ENCODE measurements at regions of chrX and their contacts with region 1.

Region 1: DNA sequence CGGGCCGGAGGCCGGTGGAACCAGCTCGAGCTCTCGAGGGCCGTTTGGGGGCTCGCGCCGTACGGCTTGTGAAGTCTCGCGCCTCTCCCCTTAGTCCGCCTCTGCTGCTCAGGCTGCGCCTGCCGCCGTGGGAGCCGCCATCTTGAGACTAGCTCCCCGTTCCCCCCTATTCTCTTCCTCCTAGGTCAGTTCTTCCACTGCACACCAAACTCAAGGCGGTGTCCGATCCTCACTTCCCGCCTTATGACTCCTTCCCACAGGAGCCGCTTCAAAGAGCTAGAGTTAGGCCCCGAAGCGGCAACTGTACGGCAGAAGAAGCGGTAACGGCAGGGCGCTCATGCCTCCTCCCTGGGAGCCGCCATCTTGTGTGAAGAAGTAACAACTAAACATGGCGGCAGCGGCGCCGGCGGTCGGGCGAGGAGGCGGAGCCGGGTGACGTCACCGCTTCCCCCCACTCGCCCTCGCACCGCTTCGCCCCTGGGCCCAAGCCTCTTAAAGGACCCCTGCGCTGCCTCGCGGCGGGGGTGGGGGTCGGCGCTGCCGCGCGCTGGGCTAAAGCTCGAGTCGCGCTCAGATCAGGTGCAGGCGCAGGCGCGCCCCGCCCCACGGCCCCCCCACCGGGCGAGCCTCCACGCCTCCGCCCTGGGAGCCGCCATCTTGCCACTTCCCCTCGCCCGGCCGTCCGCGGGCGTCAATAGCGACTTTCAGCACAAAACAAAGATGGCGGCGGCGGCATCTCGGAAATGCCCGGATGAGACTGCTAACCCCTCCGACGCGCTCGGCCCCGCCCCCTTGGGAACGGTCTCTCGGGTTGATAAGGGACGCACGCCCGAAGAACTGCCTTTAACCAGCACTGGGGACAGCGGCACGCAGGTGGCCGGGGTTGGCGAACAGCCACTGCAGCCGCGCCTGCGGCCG is at the start of gene HCFC1:
- DNase-seq: peak; percentile 88
- ATAC-seq: peak; percentile 31
- H3K4me3 Mint-ChIP-seq: peak within 1 kb of the TSS; percentile 100
- H3K27ac Mint-ChIP-seq: peak within 1 kb of the TSS; percentile 100
- H3K4me1 Mint-ChIP-seq: peaks cover 12% of the 10 kb centered on the region
- H3K27me3 Mint-ChIP-seq: no peaks in the 10 kb centered on the region
- total RNA-seq, gene HCFC1: 101 to 107 TPM

Region 2: GRCh38 chrX:153744214-153744724 is 227.4 kb before region 1 on chrX:
- POLR2A ChIA-PET with region 1: no interaction called
- DNase-seq: no peak
- ATAC-seq: no peak
- H3K4me3 Mint-ChIP-seq: no peak overlapping the region
- H3K27ac Mint-ChIP-seq: no peak overlapping the region
- H3K4me1 Mint-ChIP-seq: peaks cover 13% of the 10 kb centered on the region
- H3K27me3 Mint-ChIP-seq: peaks cover 9% of the 10 kb centered on the region

Region 3: GRCh38 chrX:153885968-153886903 is 85.5 kb before region 1 on chrX and contains the start of gene L1CAM:
- POLR2A ChIA-PET with region 1: no interaction called
- DNase-seq: no peak
- ATAC-seq: peak; percentile 48
- H3K4me3 Mint-ChIP-seq: peak within 1 kb of the TSS; percentile 64
- H3K27ac Mint-ChIP-seq: no peak within 1 kb of the TSS
- H3K4me1 Mint-ChIP-seq: no peaks in the 10 kb centered on the region
- H3K27me3 Mint-ChIP-seq: peaks cover 29% of the 10 kb centered on the region
- total RNA-seq, gene L1CAM: 4.5 to 7.2 TPM

Region 4: GRCh38 chrX:153927922-153928760 is 43.6 kb before region 1 on chrX:
- POLR2A ChIA-PET with region 1: interaction called, 110 read pairs
- DNase-seq: peak; percentile 91
- ATAC-seq: peak; percentile 77
- H3K4me3 Mint-ChIP-seq: peak overlapping the region; percentile 97
- H3K27ac Mint-ChIP-seq: peak overlapping the region; percentile 98
- H3K4me1 Mint-ChIP-seq: peaks cover 15% of the 10 kb centered on the region
- H3K27me3 Mint-ChIP-seq: no peaks in the 10 kb centered on the region

Region 5: DNA sequence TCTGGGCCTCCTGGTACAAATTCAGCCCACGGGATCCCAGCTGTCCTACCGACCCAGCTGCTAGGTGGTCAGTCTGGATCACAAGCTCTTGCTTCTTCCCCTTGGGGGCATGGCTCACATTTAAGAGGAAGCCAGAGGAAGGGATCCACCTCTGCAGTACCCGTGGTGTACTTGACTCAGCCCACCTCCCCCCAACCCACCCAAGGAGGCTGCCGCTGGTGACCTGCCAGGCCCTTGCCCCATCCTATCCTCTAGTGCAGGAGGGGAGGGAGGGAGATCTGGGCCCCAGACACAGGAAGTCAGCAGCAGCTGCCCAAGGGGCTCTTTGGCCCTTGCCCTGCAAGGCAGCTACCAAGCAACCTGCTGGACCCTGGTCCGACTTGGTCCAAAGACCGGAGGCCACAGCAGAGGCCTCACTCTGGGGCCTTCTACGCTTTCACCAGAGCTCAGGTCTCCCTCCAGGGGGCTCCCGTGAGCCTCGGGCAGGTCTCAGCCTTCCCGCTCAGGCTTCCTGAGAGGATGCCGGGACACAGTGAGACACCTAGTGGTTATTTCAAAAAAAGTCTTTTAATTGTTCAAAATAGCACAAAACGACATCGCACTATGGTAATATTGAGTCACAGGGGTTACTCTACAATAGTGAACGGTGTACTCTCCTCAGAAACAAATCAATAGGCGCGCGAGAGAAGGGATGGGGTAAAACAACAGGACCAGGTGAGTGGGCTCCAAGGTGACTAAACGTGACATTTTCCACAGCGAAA is 24.5 kb before region 1 on chrX:
- POLR2A ChIA-PET with region 1: interaction called, 10 read pairs
- DNase-seq: peak; percentile 81
- ATAC-seq: peak; percentile 79
- H3K4me3 Mint-ChIP-seq: peak overlapping the region; percentile 52
- H3K27ac Mint-ChIP-seq: peak overlapping the region; percentile 87
- H3K4me1 Mint-ChIP-seq: peaks cover 15% of the 10 kb centered on the region
- H3K27me3 Mint-ChIP-seq: no peaks in the 10 kb centered on the region

Region 6: DNA sequence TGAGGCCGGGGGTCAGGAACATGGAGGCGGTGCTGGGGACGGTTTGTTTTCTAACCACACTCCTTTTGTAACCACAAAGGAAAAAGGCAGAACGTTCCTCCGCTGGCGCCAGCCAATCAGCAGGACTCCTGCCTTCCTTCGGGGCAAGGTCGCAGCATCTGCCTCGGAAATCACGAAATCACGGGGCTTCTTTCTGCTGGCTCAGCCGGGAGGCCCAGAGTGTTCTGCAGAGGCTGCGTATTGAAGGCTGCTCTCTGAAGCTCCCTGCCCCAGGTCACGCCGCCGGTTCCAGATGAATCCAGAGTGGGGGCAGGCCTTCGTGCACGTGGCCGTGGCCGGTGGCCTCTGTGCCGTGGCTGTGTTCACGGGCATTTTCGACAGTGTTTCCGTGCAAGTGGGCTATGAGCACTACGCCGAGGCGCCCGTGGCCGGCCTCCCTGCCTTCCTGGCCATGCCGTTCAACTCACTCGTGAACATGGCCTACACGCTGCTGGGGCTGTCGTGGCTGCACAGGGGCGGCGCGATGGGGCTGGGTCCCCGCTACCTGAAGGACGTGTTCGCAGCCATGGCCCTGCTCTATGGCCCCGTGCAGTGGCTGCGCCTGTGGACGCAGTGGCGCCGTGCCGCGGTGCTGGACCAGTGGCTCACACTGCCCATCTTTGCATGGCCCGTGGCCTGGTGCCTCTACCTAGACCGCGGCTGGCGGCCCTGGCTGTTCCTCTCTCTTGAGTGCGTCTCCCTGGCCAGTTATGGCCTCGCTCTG is 10.2 kb after region 1 on chrX:
- POLR2A ChIA-PET with region 1: interaction called, 62 read pairs
- DNase-seq: peak; percentile 63
- ATAC-seq: peak; percentile 51
- H3K4me3 Mint-ChIP-seq: peak overlapping the region; percentile 63
- H3K27ac Mint-ChIP-seq: peak overlapping the region; percentile 99
- H3K4me1 Mint-ChIP-seq: peaks cover 35% of the 10 kb centered on the region
- H3K27me3 Mint-ChIP-seq: no peaks in the 10 kb centered on the region

Region 7: DNA sequence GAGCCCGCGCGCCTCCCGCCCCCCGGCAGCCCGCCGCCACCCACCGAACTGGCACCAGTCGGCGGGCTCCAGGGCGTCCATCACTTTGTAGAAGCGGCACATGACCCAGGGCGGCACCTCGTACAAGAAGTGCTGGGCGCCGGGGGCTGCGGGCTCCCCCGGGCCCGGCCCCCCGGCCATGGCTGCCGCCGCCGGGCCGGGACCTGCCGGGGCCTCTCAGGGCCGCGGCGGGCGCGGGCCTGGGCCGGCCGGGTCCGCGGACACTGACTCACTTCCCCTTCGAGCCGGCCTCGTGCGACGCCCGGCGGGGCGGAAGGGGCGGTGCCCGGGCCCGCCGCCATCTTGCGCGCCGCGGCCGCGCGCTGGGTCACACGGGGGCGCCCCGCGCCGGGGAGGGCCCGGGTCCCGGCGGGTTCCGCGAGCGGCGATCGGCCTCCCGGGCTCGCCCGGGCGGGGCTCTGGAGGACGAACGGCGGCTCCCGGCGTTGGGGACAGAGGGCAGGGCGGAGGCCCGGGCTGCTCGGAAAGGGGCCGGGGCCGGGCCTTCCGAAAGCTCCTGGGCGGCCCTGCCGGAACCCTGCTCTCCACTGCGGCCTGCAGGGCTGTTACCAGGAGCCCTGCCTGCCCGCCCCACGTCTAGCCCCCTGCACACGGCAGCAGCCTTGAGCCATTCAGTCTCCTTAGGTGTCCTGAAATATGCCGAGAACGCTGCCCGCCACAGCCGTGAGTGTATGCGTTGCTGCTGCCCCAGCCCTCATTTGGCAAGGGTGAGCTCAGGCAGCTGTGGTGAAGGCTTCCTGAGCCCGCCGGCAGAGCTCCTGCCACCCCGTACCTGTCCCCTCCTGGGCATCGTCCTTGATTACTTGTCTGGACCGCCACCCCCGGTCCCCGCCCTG is 48.2 kb after region 1 on chrX and contains the start of gene IRAK1:
- POLR2A ChIA-PET with region 1: interaction called, 35 read pairs
- DNase-seq: peak; percentile 79
- ATAC-seq: peak; percentile 76
- H3K4me3 Mint-ChIP-seq: peak within 1 kb of the TSS; percentile 89
- H3K27ac Mint-ChIP-seq: peak within 1 kb of the TSS; percentile 90
- H3K4me1 Mint-ChIP-seq: peaks cover 8% of the 10 kb centered on the region
- H3K27me3 Mint-ChIP-seq: no peaks in the 10 kb centered on the region
- total RNA-seq, gene IRAK1: 127 to 135 TPM